ENCODE measurements at regions of chr10 and their contacts with region 1.

Region 1: DNA sequence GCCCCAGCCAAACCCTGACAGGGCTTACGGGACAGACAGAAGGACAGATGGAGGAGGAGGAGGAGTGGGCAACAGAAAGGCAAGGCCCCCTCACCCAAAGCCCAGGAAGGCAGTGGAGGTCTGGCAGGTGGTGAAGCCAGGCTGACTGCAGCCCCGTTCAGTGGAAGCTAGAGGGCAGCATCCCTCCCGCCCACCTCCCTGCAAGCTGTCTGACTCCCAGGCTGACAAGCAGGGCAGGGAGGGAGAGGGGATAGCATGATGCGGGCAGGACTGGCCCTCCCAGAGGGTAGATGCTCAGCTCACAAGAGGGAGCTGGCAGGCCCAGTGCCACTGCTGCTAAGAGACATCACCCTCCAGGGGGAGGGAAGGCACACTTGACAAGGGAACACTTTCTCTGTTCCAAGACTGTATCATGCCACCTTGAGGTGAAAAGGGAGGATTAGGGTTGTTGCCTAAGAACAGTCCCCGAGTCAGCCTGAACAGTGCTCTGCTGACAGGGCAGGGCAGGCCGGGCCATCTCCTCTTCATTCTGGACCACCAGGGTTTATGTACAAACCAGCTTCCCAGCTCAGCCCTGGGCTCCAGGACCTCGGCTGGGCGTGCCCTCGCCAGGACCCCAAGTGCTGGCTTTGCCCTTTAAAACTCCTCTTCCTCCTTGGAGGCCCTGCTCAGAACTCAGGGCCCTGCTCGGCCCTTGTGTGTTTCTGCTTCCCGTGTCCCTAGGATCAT is 61.8 kb downstream of the RASGEF1A start:
- DNase-seq: peak in 1 of 2 experiments; percentile 74
- H3K4me3 ChIP-seq: no peak overlapping the region
- H3K27ac ChIP-seq: no peak overlapping the region
- H3K4me1 ChIP-seq: peaks cover 0 to 10% (median 4%) of the 10 kb centered on the region in 4 experiments; a peak in 5 of 7 replicates
- H3K27me3 ChIP-seq: no peaks in the 10 kb centered on the region
- CTCF ChIP-seq: peak in 2 of 3 experiments; percentile 90 to 92; a peak in 3 of 4 replicates
- EP300 ChIP-seq: no peak
- POLR2A ChIP-seq: no peak
- RAD21 ChIP-seq: peak; percentile 65 to 79

Region 2: GRCh38 chr10:43141421-43141820 is 63.7 kb before region 1 on chr10:
- CTCF ChIA-PET with region 1: interaction called, 10 read pairs
- POLR2A ChIA-PET with region 1: no interaction called
- DNase-seq: no peak
- H3K4me3 ChIP-seq: no peak overlapping the region
- H3K27ac ChIP-seq: no peak overlapping the region
- H3K4me1 ChIP-seq: peaks cover 0 to 10% (median 0%) of the 10 kb centered on the region in 4 experiments; a peak in 4 of 7 replicates
- H3K27me3 ChIP-seq: peaks cover 0 to 7% (median 1%) of the 10 kb centered on the region in 4 experiments; a peak in 3 of 7 replicates
- CTCF ChIP-seq: no peak
- EP300 ChIP-seq: no peak
- POLR2A ChIP-seq: no peak
- RAD21 ChIP-seq: no peak

Region 3: DNA sequence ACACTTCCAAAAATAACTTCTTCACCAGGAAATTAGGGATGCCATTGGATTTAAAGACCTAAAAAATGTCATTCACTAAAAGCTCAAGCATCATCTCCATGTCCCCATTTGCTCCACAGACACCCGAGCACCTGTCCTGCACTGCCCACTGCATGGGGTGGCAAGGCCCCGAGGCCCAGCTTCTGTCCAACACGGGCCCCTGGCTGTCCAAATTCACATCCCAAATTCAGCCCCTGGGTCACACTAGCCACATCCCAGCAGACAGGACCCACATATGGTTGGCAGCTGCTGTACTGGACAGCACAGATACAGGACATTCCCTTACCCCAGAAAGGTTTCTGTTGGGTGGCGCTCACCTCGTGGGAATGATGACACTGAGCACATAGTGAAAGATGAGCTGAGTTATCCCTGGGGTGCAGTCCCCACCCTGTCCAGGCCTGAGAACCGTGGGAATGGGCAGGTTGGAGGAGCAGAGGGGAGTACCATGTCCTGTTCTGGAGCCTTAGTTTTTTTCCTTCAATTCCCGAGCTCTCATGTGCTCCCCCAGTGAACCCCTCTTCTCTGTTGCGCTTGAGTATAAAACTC is 11.5 kb before region 1 on chr10:
- CTCF ChIA-PET with region 1: interaction called, 22 read pairs
- POLR2A ChIA-PET with region 1: interaction called, 5 read pairs
- DNase-seq: peak in 1 of 2 experiments; percentile 38
- H3K4me3 ChIP-seq: no peak overlapping the region
- H3K27ac ChIP-seq: no peak overlapping the region
- H3K4me1 ChIP-seq: peaks cover 0 to 3% (median 0%) of the 10 kb centered on the region in 4 experiments; a peak in 2 of 7 replicates
- H3K27me3 ChIP-seq: no peaks in the 10 kb centered on the region
- CTCF ChIP-seq: no peak
- EP300 ChIP-seq: no peak
- POLR2A ChIP-seq: no peak
- RAD21 ChIP-seq: no peak

Region 4: DNA sequence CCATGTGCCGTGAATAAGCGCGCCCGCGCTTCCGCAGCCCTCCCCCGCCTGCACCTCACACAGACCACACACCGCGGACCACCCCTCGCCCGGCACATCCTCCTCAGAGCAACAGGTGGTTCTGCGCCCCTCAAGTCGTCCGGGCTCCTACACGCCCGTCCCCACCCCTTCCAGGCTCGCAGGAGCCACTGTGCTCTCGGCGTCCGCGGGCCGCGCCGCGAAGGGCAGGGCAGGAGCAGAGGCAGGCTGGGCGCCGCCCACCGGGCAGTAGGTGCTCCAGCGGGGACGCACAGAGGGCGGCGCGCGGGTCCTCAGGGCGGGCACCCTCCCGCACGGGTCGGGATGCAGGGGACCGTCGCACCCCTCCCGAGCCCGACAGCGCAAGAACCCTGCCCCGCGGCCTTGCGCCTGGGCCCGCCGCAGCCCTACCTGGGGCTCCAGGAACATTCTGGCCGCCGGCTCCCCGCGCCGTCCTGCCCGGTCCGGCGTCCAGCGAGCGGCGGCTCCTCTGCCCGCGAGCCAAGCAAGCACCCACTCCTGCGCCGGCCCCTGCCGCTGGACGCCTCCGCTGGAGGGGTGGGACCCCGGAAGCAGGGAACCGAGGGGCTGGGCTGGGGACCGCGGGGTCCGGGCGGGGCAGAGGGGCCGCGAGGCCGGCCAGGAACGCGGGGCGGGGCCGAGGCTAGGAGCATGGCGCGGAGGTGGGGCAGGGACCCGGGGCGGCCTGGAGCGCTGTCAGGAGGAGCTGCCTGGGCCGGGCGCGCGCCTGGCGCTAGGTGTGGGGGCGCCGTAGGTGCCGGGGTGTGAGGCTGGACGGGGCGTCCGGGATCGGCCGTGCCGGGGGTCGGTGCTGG is 24.3 kb after region 1 on chr10:
- CTCF ChIA-PET with region 1: interaction called, 159 read pairs
- POLR2A ChIA-PET with region 1: interaction called, 4 read pairs
- DNase-seq: peak in 1 of 2 experiments; percentile 85
- H3K4me3 ChIP-seq: peak overlapping the region; percentile 57 to 76 (median 59)
- H3K27ac ChIP-seq: no peak overlapping the region
- H3K4me1 ChIP-seq: peaks cover 0 to 14% (median 7%) of the 10 kb centered on the region in 4 experiments; a peak in 5 of 7 replicates
- H3K27me3 ChIP-seq: peaks cover 19 to 40% (median 39%) of the 10 kb centered on the region in 4 experiments
- CTCF ChIP-seq: no peak
- EP300 ChIP-seq: no peak
- POLR2A ChIP-seq: no peak
- RAD21 ChIP-seq: no peak

Region 5: DNA sequence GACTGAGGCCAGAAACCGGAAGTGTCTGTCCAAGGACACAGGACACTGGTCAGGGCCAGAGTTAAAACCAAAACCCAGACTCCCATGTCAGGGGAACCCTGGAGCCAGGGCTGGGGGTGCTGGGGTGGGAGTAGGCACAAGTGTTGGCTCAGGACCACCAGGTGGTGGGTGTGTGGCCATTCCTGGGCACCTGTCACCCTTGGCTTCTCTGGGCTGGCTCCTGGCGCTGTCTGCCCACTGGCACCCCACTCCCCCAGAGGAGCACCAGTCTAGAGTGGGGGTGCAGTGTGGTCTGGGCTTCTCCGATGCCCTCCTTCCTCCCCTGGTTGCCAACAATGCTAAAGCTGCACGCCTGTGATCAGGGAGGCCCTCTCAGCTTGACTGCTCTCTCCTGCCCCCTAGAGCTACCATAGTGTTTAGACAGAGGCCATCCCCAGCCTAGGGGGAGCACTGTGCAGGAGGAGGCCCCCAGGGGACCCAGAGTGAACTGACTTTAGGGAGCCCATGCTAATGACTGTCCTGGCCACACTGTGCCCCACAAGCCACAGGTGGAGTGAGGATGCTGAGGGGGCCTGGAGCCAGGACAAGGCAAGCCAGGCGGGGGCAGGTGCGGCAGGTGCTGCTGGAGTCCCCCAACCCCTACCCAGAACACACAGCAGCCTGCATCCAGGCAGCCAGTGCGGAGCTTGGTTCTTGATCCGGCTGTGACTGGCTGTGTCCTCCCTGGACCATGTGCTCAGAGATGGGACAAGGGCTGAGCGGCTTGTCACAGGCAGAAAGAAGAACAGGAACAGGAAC is 50.7 kb after region 1 on chr10:
- CTCF ChIA-PET with region 1: interaction called, 68 read pairs
- POLR2A ChIA-PET with region 1: no interaction called
- DNase-seq: peak in 1 of 2 experiments; percentile 75
- H3K4me3 ChIP-seq: no peak overlapping the region
- H3K27ac ChIP-seq: no peak overlapping the region
- H3K4me1 ChIP-seq: peaks cover 0 to 7% (median under 1%) of the 10 kb centered on the region in 4 experiments; a peak in 5 of 7 replicates
- H3K27me3 ChIP-seq: no peaks in the 10 kb centered on the region
- CTCF ChIP-seq: peak in 2 of 3 experiments; percentile 85 to 90; a peak in 3 of 4 replicates
- EP300 ChIP-seq: no peak
- POLR2A ChIP-seq: no peak
- RAD21 ChIP-seq: peak; percentile 65 to 74